SK-N-SH (cell line): ENCODE measurements at regions of chr11 and their contacts with region 1.

Region 1: GRCh38 chr11:71580057-71581003 is 2.3 kb downstream of the KRTAP5-11 start:
- DNase-seq: peak; percentile 84
- H3K4me3 ChIP-seq: no peak overlapping the region; a peak in 1 of 4 replicates
- H3K27ac ChIP-seq: no peak overlapping the region
- H3K4me1 ChIP-seq: peaks cover 0 to 5% of the 10 kb centered on the region in 2 experiments; a peak in 1 of 4 replicates
- H3K27me3 ChIP-seq: no peaks in the 10 kb centered on the region
- CTCF ChIP-seq: peak; percentile 67
- EP300 ChIP-seq: no peak
- RAD21 ChIP-seq: peak; percentile 31

Region 2: GRCh38 chr11:71477641-71478527 is 102.4 kb before region 1 on chr11:
- CTCF ChIA-PET with region 1: no interaction called
- POLR2A ChIA-PET with region 1: no interaction called
- DNase-seq: no peak
- H3K4me3 ChIP-seq: no peak overlapping the region
- H3K27ac ChIP-seq: no peak overlapping the region
- H3K4me1 ChIP-seq: no peaks in the 10 kb centered on the region
- H3K27me3 ChIP-seq: no peaks in the 10 kb centered on the region
- CTCF ChIP-seq: no peak
- EP300 ChIP-seq: no peak
- RAD21 ChIP-seq: no peak

Region 3: GRCh38 chr11:71568435-71569349 is 11.6 kb before region 1 on chr11:
- CTCF ChIA-PET with region 1: interaction called, 35 read pairs
- POLR2A ChIA-PET with region 1: no interaction called
- DNase-seq: peak; percentile 55
- H3K4me3 ChIP-seq: no peak overlapping the region
- H3K27ac ChIP-seq: no peak overlapping the region
- H3K4me1 ChIP-seq: peaks cover 0 to 15% of the 10 kb centered on the region in 2 experiments; a peak in 1 of 4 replicates
- H3K27me3 ChIP-seq: no peaks in the 10 kb centered on the region
- CTCF ChIP-seq: no peak
- EP300 ChIP-seq: peak in 1 of 2 experiments; percentile 42; a peak in 1 of 4 replicates
- RAD21 ChIP-seq: no peak